ENCODE measurements at regions of chr10 and their contacts with region 1.

Region 1: DNA sequence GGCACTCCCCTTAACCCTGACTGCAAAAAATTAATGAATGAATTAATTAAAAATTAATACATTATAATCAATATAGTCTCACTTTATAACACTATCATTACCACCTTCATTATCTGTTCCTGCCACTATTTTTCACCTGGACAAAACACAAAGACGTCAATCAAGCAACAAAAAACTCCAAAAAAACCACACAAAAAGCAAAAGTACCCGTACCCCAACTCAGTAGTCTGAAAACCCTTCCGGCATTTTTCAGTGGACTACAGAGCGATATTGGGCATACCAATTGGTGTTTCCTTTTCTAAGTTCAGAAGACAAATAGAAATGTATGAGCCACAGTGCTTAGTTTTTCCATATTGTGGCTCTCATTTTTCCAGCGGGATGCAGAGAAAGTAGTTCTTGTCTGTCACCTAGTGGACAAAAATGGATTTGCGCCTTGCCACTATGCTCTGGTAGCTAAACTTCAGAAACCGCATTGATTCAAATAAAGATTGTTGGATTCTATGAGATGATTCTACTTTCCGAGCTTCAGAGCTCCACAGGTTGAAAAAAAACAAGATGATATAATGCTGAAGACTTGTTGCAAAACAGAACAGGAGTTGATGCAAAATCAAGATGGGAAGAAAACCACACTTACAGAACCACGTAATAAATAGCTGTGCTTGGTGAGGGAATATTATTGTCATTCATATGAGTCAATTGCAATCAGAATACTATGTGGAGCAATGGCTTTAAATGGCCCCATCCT is 50.6 kb upstream of the ITGB1 start:
- DNase-seq: peak; percentile 31
- H3K4me3 Mint-ChIP-seq: peak overlapping the region; percentile 63
- H3K27ac Mint-ChIP-seq: peak overlapping the region; percentile 40
- H3K4me1 Mint-ChIP-seq: peaks cover 24% of the 10 kb centered on the region
- H3K27me3 Mint-ChIP-seq: peaks cover 10% of the 10 kb centered on the region

Region 2: DNA sequence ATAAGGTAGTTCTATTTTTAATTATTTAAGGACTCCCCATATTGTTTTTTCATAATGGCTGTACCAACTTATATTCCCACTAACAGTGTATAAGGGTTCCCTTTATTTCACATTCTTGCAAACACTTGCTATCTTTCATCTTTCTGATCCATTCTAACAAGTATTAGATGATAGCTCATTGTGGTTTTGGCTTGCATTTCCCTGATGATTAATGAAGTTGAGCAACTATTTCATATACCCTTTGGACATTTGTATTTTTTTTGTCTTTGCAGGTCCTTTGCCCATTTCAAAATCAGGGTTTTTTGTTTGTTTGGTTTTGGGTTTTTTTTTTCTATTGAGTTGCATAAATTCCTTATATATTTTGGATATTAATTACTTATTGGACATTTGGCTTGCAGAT is 768.9 kb before region 1 on chr10:
- intact Hi-C with region 1: loop called (anchors 1 kb)
- DNase-seq: no peak
- H3K4me3 Mint-ChIP-seq: no peak overlapping the region
- H3K27ac Mint-ChIP-seq: no peak overlapping the region
- H3K4me1 Mint-ChIP-seq: peaks cover 16% of the 10 kb centered on the region
- H3K27me3 Mint-ChIP-seq: no peaks in the 10 kb centered on the region

Region 3: GRCh38 chr10:32445740-32446535 is 562.7 kb before region 1 on chr10 and contains the start of gene CCDC7:
- intact Hi-C with region 1: loop called (anchors 5 kb)
- DNase-seq: peak; percentile 83
- H3K4me3 Mint-ChIP-seq: peak within 1 kb of the TSS; percentile 98
- H3K27ac Mint-ChIP-seq: peak within 1 kb of the TSS; percentile 96
- H3K4me1 Mint-ChIP-seq: peaks cover 9% of the 10 kb centered on the region
- H3K27me3 Mint-ChIP-seq: peaks cover 3% of the 10 kb centered on the region
- total RNA-seq, gene CCDC7: 9.0 and 10.2 TPM in 2 replicates

Region 4: DNA sequence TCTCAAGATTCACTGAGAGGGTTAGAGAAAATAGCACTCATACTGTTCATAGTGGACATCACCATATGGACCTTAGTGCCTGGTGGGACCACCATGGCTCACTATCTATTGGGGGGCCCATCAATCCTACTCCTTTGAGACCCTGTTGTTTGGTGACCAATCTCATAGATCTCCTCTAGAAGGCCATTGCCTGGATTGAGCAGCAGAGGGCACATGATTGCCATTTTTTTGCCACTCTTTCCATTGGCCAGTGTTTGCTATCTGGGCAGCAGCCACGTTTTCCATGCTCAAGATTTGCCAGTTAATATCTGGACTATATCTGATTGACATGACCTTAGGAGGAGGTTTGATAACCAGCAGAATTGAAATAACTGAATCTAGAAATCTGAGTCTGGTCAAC is 295.1 kb before region 1 on chr10:
- intact Hi-C with region 1: no loop called
- DNase-seq: no peak
- H3K4me3 Mint-ChIP-seq: no peak overlapping the region
- H3K27ac Mint-ChIP-seq: no peak overlapping the region
- H3K4me1 Mint-ChIP-seq: no peaks in the 10 kb centered on the region
- H3K27me3 Mint-ChIP-seq: no peaks in the 10 kb centered on the region

Region 5: GRCh38 chr10:32865170-32865569 is 143.5 kb before region 1 on chr10:
- intact Hi-C with region 1: no loop called
- DNase-seq: no peak
- H3K4me3 Mint-ChIP-seq: no peak overlapping the region
- H3K27ac Mint-ChIP-seq: no peak overlapping the region
- H3K4me1 Mint-ChIP-seq: no peaks in the 10 kb centered on the region
- H3K27me3 Mint-ChIP-seq: peaks cover 2% of the 10 kb centered on the region

Region 6: GRCh38 chr10:32958085-32959005 is 50.3 kb before region 1 on chr10 and contains the start of gene ITGB1:
- intact Hi-C with region 1: loop called (anchors 1 kb)
- DNase-seq: peak; percentile 81
- H3K4me3 Mint-ChIP-seq: peak within 1 kb of the TSS; percentile 86
- H3K27ac Mint-ChIP-seq: peak within 1 kb of the TSS; percentile 93
- H3K4me1 Mint-ChIP-seq: peaks cover 35% of the 10 kb centered on the region
- H3K27me3 Mint-ChIP-seq: peaks cover 12% of the 10 kb centered on the region
- total RNA-seq, gene ITGB1: 51.4 and 61.4 TPM in 2 replicates

Region 7: DNA sequence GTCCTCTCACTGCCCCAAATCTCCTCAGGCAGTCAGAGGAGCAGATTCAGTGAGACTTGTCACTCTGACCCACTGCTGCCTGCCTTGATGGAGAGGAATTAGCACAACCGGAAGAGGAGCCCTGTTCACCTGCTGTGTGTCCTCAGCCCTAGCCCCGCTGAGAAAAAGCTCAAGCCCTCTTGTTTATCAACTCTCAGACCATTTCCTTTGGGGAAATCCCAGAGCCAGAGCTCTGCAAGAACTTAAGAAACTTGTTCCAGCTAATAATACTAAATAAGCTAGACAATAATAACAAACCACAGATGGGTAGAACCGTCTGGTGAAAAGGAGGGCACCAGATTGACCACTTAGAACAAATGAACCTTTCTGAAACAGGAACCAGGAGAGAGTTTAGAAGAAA is 12.9 kb before region 1 on chr10:
- intact Hi-C with region 1: no loop called
- DNase-seq: no peak
- H3K4me3 Mint-ChIP-seq: no peak overlapping the region
- H3K27ac Mint-ChIP-seq: no peak overlapping the region
- H3K4me1 Mint-ChIP-seq: peaks cover 5% of the 10 kb centered on the region
- H3K27me3 Mint-ChIP-seq: peaks cover 2% of the 10 kb centered on the region

Region 8: GRCh38 chr10:33120700-33121099 is 112.0 kb after region 1 on chr10:
- intact Hi-C with region 1: loop called (anchors 1 kb)
- DNase-seq: no peak
- H3K4me3 Mint-ChIP-seq: peak overlapping the region; percentile 2
- H3K27ac Mint-ChIP-seq: peak overlapping the region; percentile 57
- H3K4me1 Mint-ChIP-seq: peaks cover 45% of the 10 kb centered on the region
- H3K27me3 Mint-ChIP-seq: no peaks in the 10 kb centered on the region

Region 9: GRCh38 chr10:33155720-33156638 is 147.3 kb after region 1 on chr10:
- intact Hi-C with region 1: loop called (anchors 1 kb)
- DNase-seq: no peak
- H3K4me3 Mint-ChIP-seq: peak overlapping the region; percentile 31
- H3K27ac Mint-ChIP-seq: peak overlapping the region; percentile 41
- H3K4me1 Mint-ChIP-seq: peaks cover 38% of the 10 kb centered on the region
- H3K27me3 Mint-ChIP-seq: peaks cover 2% of the 10 kb centered on the region

Measured in activated T-helper 1 cell treated with anti-CD3 and anti-CD28 coated beads, Interleukin-12 subunit alpha, Interleukin-12 subunit beta, Interleukin-2, Interleukin-4 antibody, amounts not matched to agents 30 ng/mL and 10 ng/mL and 1 ng/mL, durations not matched to agents 14 hours and 24 hours and 36 hours (primary cell).